ENCODE measurements at regions of chr2 and their contacts with region 1.

Region 1: GRCh38 chr2:97645695-97646629 is at the start of gene COX5B:
- DNase-seq: peak; percentile 99
- ATAC-seq: peak; percentile 98
- H3K4me3 Mint-ChIP-seq: peak within 1 kb of the TSS; percentile 89
- H3K27ac Mint-ChIP-seq: peak within 1 kb of the TSS; percentile 93
- H3K4me1 Mint-ChIP-seq: peaks cover 17% of the 10 kb centered on the region
- H3K27me3 Mint-ChIP-seq: peaks cover 2% of the 10 kb centered on the region
- total RNA-seq, gene COX5B: 215 to 216 TPM

Region 2: GRCh38 chr2:97656905-97657587 is 11.1 kb after region 1 on chr2:
- CTCF ChIA-PET with region 1: interaction called, 47 read pairs
- POLR2A ChIA-PET with region 1: interaction called, 187 read pairs
- DNase-seq: no peak
- ATAC-seq: no peak
- H3K4me3 Mint-ChIP-seq: no peak overlapping the region
- H3K27ac Mint-ChIP-seq: no peak overlapping the region
- H3K4me1 Mint-ChIP-seq: peaks cover 13% of the 10 kb centered on the region
- H3K27me3 Mint-ChIP-seq: no peaks in the 10 kb centered on the region

Region 3: DNA sequence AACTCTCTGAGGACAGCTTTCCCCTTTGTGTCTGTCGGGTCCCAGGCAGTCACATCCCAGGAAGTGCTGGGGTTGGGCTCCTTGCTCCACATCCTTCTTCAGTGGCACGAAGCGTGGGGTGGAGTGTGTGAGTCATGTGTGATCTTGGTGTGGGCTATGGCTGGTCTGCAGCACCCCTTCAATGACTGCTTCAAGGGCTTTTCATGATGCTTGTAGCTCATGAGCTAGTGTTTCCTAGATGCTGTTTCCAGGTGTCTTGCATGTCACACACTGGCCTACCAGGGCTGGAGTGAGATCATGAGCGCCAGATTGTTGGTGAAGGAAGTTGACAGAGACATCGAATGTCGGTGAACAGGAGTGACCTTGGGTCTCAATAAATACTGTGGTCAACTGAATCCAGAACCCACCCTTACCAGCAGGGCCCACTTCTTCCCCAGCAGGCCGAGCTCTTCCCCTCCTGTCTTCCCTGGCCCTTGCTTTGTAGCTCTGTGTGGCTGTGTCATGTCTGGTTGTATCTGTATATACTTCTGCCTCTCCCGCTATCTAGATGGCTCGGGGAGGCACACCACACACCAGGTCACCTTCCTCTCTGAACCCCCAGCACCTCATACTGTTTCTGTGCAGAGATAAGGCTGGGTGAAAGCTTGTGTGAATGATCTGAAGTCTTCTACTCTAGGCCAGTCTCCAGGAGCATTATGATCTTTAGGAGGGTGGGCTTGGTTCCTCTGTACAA is 27.4 kb after region 1 on chr2:
- CTCF ChIA-PET with region 1: interaction called, 4 read pairs
- POLR2A ChIA-PET with region 1: interaction called, 18 read pairs
- DNase-seq: peak; percentile 37
- ATAC-seq: peak; percentile 51
- H3K4me3 Mint-ChIP-seq: no peak overlapping the region
- H3K27ac Mint-ChIP-seq: peak overlapping the region; percentile 27
- H3K4me1 Mint-ChIP-seq: peaks cover 28% of the 10 kb centered on the region
- H3K27me3 Mint-ChIP-seq: peaks cover under 1% of the 10 kb centered on the region

Region 4: GRCh38 chr2:97718051-97718882 is 72.3 kb after region 1 on chr2:
- CTCF ChIA-PET with region 1: interaction called, 3 read pairs
- POLR2A ChIA-PET with region 1: interaction called, 14 read pairs
- DNase-seq: peak; percentile 90
- ATAC-seq: peak; percentile 77
- H3K4me3 Mint-ChIP-seq: peak overlapping the region; percentile 93
- H3K27ac Mint-ChIP-seq: peak overlapping the region; percentile 98
- H3K4me1 Mint-ChIP-seq: peaks cover 78% of the 10 kb centered on the region
- H3K27me3 Mint-ChIP-seq: no peaks in the 10 kb centered on the region

Measured in activated CD8-positive, alpha-beta T cell treated with anti-CD3 and anti-CD28 coated beads, Interleukin-2, amount 10 ng/mL, durations not matched to agents 7 days and 5 days (primary cell).